ENCODE measurements at regions of chr1 and their contacts with region 1.

Region 1: DNA sequence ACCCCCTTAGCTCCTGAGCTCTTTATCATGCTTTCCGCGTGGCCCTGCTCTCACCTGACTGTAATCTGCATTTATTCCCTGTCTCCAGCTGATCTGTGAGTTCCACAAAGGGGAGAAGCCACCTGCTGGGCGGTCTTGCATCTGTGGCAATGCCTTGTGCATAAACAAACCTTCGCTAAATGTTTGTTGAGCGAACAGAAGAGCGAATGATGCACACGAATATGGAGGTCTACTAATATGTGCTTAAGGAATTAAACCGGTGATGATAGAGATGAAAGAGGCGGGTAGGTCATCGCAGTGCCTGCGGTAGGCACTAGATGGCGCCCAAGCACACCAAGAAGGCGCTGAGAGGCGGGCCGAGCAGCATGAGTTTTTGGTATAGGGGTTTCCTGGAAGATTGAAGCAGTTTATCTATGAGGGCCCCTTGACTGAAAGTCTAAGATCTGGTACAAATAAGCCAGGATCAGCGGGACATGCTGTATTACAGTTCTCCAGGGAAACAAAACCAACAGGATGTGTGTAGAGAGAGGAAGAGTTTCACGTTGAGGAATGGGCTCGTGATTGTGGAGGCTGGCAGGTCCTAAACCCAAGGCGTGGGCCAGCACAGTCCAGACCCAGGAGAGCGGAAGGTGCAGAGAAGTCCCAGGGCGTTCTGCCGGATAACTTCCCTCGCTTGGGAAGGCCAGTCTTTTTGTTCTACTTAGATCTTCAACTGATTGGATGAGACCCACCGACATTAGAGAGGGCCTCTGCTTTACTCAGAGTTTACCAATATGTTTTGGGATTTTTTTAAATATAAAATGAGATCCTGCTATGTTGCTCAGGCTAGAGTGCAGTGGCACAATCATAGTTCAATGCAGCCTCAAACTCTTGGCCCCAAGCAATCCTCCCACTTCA is 34.7 kb downstream of the TOMM20 start:
- DNase-seq: peak; percentile 57 to 71

Region 2: DNA sequence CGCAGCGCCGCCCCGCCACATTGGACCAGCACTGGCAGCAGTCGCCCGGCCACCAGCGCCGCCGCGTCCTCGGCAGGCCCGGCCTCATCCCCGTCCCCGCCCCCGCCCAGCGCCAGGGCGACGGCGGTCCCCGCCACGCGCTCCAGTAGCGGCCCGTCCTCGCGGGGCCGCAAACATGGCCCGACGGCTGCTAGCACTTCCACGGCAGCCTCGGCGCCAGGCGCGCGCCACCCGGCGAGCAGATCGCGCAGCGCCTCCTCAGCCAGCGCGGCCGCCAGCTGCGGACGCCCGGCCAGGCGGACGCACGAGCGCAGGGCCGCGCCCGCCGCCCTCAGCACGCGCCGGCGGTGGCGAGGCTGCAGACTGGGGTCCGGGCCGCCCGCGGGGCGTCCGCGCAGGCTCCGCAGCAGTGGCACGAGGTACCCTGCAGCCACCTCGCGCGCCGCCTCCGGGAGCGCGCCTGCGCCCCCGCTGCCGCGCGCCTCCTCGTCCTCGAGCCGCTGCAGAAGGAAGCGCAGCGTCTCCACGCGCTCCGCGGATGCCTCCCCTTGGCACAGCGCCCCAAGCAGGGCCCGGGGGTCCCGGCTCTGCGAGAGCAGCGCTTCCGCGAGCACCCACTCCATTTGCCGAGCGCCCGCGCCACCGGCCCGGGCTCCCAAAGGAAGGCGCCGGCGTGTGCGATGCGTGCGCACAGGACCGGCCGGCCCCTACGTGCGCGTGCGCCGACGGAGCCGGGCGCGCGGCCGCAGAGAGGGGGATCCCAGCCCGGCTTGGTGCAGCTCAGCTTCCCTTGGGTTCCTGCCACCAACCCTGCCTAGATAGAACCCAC is 615.2 kb before region 1 on chr1 and contains the start of gene TARBP1:
- in situ Hi-C with region 1: loop called (anchors 25 kb)
- DNase-seq: peak; percentile 84 to 86

Region 3: GRCh38 chr1:235734335-235734734 is 640.4 kb after region 1 on chr1:
- in situ Hi-C with region 1: no loop called
- DNase-seq: no peak